Tibial artery (tissue), 4 donors: ENCODE measurements at regions of chr13 and their contacts with region 1.

Region 1: DNA sequence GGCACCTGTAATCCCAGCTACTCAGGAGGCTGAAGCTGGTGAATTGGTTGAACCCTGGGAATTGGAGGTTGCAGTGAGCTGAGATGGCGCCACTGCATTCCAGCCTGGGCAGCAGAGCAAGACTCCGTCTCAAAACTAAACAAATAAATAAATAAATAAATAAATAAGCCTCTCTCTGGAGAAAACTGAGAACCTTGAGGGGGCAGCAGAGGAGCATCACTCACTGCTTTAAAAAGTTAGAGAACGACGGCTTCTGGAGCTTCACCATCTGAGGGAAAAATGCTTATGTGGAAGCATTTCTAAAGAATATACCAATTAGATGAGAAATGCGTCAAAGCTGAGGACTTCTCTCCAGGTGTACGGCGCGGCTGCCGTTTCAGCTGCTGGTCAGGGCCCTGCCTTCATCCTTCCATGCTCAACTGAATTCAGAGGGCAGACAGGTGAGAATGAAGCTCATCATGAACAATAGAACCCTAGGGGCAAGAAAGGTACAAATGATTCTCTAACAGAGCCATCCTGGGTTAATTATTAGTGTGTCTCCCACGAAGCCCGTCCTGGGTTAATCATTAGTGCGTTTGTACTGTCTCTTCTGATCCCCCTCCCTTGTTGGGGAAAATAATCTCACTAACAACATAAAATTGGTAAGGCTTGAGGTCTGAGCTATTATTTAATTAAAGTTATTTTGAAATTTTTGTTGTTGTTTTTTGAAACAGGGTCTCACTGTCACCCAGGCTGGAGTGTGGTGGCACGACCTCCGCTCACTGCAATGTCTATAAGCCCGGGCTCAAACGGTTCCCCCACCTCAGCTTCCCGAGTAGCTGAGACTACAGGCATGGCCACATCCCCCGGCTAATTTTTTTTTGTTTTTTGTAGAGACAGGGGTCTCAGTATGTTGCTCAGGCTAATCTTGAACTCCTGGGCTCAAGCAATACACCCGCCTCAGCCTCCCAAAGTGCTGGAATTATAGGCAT is 80.1 kb downstream of the IPO5 start:
- DNase-seq: no peak
- H3K4me3 ChIP-seq: no peak overlapping the region
- H3K27ac ChIP-seq: no peak overlapping the region
- H3K4me1 ChIP-seq: no peaks in the 10 kb centered on the region
- H3K27me3 ChIP-seq: no peaks in the 10 kb centered on the region
- CTCF ChIP-seq: peak; percentile 17 to 34

Region 2: DNA sequence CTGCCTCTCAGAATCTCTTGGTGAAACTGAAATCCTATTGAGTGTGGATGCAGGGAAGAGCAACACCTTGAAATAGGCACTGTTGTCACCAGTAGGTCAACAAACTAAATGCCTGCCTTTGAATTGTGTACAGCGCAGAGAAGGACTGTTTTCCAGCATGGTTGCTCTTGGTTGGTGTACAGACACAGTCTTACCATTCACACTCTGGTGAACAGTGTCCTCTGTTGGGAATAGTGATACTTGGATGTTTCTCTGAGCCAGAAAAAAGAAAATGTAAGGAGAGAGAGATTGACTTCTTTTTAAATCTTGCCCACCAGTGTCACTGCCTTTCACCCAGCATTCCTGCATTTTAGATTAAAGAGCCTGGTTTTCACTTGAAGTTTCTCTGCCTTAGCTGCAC is 363.7 kb after region 1 on chr13:
- intact Hi-C with region 1: loop called (anchors 10 kb)
- DNase-seq: no peak
- H3K4me3 ChIP-seq: no peak overlapping the region
- H3K27ac ChIP-seq: no peak overlapping the region
- H3K4me1 ChIP-seq: no peaks in the 10 kb centered on the region
- H3K27me3 ChIP-seq: no peaks in the 10 kb centered on the region
- CTCF ChIP-seq: peak in 1 of 2 experiments; percentile 42

Region 3: DNA sequence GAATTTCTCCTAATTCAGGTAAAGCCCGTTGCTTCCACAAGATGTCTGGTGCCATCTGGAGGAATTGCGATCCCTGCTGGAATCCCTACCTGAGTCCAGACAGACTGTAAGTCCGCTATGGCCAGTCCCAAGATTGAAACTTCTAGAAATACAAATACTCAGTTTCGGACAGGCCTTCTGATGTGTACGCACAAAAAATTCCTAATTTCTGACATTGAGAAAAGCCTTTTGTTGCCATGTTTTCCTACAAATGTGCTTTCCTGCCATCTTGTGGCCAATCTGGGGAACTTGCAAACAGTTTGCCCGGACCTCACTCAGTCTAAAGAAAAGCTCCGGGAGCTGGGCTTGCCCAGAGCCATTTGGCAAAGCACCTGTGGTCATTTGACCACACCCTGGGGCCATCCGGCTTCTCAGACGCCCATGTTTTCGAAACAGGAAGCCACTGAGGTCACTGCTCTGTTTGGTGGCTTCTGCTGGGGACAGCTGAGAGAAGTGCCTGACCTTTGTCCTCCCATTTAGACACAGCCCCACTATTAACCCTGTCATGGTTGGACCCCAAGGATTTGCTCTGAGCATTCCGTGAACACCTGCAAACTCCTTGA is 639.5 kb after region 1 on chr13:
- intact Hi-C with region 1: loop called (anchors 10 kb)
- DNase-seq: peak; percentile 74 to 86
- H3K4me3 ChIP-seq: no peak overlapping the region
- H3K27ac ChIP-seq: no peak overlapping the region
- H3K4me1 ChIP-seq: peaks cover 0 to 10% (median 2%) of the 10 kb centered on the region in 4 donors
- H3K27me3 ChIP-seq: no peaks in the 10 kb centered on the region
- CTCF ChIP-seq: peak; percentile 82 to 86